ENCODE measurements at regions of chr20 and their contacts with region 1.

Region 1: DNA sequence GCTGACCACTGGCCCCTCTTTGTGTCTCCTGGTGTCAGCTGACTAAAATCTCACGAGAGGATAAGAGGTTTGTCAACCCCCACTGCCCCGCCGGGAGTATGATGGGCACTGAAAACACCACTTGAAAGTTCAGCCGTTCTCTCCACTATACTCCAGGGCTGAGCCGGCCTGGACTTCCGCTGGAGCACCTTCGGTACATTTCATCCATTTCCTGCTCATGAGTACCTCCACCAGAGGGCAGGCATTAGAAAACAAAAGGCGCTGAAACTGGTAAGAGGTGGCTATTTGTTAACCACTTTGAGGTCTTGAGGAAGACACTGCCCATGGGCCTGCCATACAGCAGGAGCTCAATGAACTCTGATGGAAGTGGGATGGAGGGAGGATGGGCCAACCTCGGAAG is 17.9 kb upstream of the ANKRD60 start:
- DNase-seq: no peak
- ATAC-seq: no peak

Region 2: DNA sequence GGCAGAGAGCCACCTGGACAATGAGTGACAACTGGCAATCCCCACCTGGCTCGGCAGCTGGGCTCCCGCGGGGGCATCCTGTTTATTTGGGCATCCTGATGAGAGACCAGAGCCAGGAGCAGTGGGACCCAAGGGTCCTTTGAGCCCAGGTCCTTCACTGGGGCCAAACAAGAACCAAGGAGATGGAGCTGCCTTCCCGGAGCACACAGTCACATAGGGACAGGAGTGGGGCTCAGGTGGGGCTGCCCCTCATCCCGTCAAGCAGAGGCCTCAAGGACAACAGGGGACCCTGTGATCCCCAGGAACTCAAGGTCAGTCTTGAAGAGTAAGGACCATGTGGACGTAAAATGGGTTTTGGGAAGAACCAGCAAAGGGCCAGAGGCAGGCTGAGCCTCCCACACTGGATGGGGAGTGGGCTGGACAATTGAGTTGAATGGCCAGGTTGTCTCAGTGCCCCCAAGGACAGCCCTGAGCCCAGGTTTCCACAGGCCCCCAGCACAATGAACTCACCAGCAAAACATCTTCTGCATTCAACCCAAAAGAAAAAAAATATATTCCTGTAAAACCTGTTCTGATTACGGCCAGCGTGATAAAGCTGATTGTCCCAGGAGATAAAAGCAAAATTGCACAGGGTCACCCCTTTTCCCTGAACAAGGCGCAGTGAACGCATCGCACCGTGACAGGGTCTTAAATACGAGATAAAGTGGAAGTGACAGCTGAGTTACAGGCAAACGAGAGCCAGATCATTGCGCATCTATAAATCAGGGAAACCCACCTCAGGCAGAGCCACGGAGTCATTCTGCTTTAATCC is 104.2 kb before region 1 on chr20:
- intact Hi-C with region 1: no loop called
- DNase-seq: no peak
- ATAC-seq: no peak

Region 3: GRCh38 chr20:58649286-58650180 is 403.2 kb after region 1 on chr20:
- intact Hi-C with region 1: loop called (anchors 10 kb)
- DNase-seq: peak; percentile 63
- ATAC-seq: no peak